ENCODE measurements at regions of chr17 and their contacts with region 1.

Region 1: GRCh38 chr17:30084788-30085187 is 31.8 kb upstream of the NSRP1 start:
- DNase-seq: no peak
- ATAC-seq: no peak
- H3K4me3 ChIP-seq: no peak overlapping the region
- H3K27ac ChIP-seq: no peak overlapping the region
- H3K4me1 ChIP-seq: no peaks in the 10 kb centered on the region
- H3K27me3 ChIP-seq: peaks cover 0 to 53% (median 10%) of the 10 kb centered on the region in 7 donors
- CTCF ChIP-seq: no peak

Region 2: DNA sequence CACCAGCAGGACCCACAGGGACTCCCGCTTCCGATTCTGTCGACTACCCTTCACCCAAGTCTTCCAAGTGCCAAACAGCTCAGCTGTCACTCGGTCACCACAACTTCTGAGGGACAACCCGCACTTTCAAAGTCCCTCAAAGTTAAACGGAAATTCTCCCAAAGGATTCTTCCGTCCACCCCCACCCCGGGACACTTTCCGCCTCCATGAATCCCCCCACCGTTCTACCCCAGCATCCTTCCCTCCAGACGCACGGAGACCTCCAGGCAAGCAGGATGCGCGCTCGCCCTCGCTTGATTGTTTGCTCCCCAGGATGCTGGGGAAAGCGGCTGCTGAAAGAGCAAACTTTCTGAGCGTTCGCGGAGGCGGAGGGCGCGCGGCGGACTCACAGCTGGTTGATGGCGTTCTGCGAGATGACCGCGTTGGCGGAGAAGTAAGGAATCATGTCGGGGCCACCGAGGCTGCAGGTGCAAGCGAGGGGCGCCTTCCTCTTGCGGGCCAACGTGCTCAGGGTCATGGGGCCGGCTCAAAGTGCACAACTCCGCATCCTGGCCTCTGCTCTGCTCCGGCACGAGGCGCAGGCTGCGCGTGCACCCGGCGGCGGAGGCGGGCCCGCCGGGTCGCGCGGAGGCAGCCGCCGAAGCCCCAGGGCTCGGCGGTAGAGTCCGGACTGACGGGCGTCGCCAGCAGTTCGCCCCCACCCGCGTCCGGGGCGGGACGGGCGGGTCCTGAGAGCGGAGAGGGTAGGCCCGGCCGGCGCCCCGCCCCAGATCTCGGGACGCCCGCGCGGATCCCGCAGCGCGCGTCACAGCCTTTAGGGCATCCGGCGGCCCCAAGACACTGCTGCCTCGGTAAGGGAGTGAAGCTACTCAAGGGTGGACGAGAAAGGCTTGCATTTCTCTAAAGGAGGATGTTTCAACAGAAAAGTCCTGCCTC is 323.8 kb before region 1 on chr17:
- intact Hi-C with region 1: no loop called
- DNase-seq: peak; percentile 91 to 94
- ATAC-seq: peak; percentile 96 to 99 (median 98)
- H3K4me3 ChIP-seq: peak overlapping the region; percentile 69 to 97 (median 86)
- H3K27ac ChIP-seq: peak overlapping the region; percentile 86 to 96 (median 92)
- H3K4me1 ChIP-seq: peaks cover 3 to 40% (median 19%) of the 10 kb centered on the region in 9 donors
- H3K27me3 ChIP-seq: no peaks in the 10 kb centered on the region
- CTCF ChIP-seq: peak in 2 of 9 donors; percentile 4 to 11

Region 3: GRCh38 chr17:29954405-29954804 is 130.4 kb before region 1 on chr17:
- intact Hi-C with region 1: loop called in 1 of 10 experiments (anchors 10 kb)
- DNase-seq: no peak
- ATAC-seq: no peak
- H3K4me3 ChIP-seq: no peak overlapping the region
- H3K27ac ChIP-seq: no peak overlapping the region
- H3K4me1 ChIP-seq: no peaks in the 10 kb centered on the region
- H3K27me3 ChIP-seq: no peaks in the 10 kb centered on the region
- CTCF ChIP-seq: peak in 2 of 9 donors; percentile 11 to 18

Region 4: DNA sequence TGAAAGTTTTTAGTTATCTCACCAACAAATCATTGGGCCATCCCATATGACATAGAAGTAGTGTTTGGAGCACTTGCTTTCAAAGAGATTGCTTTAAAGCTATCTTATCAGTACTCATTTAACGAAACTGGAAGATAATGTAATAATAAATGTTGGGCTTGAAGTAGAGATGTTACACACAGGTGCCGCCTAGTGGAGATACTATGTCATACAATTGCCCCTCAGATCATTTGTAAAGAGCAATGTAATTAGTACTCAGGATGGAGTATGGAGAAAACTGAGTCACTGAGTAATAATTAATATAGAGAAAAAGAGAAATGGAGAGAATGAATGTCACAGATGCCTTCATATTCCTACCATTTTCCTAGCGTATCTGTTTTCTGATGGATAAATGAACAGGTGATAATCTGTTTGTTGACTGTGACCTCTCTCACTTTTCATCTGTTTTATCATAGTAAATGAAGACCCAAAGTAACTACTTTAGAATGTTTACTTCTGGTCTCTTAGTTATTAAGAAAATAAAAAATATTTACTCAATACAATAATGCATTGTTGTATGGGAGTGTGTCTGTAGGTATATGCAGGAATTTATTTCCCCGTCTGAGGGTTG is 63.0 kb before region 1 on chr17:
- intact Hi-C with region 1: no loop called
- DNase-seq: no peak
- ATAC-seq: no peak
- H3K4me3 ChIP-seq: no peak overlapping the region
- H3K27ac ChIP-seq: no peak overlapping the region
- H3K4me1 ChIP-seq: no peaks in the 10 kb centered on the region
- H3K27me3 ChIP-seq: peaks cover 0 to 6% (median 0%) of the 10 kb centered on the region in 7 donors
- CTCF ChIP-seq: peak; percentile 53 to 84 (median 74)